GM12878 (cell line): ENCODE measurements at regions of chr3 and their contacts with region 1.

Region 1: DNA sequence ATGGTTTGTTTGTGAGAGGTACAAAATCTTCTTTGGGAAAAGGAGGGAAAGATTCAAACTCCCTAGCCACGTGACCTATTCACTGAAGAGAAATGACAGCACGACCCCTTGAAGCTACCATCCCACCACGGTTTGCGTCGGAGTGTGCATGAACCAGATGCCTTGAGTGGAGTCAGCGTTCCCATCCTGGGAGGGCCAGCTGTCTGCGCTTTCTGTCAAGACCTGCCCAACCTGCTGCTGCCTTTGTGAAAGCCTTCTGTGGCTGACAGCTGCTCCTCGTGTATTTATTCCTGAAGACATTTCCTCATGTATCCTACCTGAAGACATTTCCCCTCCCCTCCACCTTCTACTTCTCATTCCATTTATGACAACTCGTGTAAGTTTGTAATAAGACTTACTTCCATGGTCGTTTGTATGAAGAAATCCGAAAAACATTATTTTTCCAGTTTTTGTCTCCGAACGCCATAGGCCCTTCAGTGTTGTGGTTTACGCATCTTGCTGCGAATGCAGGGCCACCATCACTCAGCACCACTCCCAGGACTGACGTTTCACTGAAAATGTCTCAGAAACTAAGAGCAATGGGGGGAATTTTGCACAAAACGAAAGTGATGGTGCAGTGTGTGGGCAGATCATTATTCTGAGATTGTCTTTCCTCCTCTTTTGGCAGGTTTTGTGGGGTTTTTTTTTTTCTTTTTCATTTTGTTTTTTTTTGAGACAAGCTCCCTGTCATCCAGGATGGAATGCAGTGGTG is 18.9 kb downstream of the EBLN2 start:
- DNase-seq: no peak
- ATAC-seq: peak; percentile 87
- H3K4me3 ChIP-seq: no peak overlapping the region
- H3K27ac ChIP-seq: no peak overlapping the region
- H3K4me1 ChIP-seq: 0 out of 2 replicates have a peak, but pooled peaks cover 3% of the 10 kb centered on the region
- H3K27me3 ChIP-seq: no peaks in the 10 kb centered on the region
- CTCF ChIP-seq: no peak
- EP300 ChIP-seq: no peak
- POLR2A ChIP-seq: no peak
- RAD21 ChIP-seq: no peak

Region 2: GRCh38 chr3:72938471-72939265 is 141.7 kb before region 1 on chr3:
- CTCF ChIA-PET with region 1: interaction called, 10 read pairs
- POLR2A ChIA-PET with region 1: no interaction called
- RAD21 ChIA-PET with region 1: interaction called, 16 read pairs
- SMC1A ChIA-PET with region 1: interaction called, 13 read pairs
- in situ Hi-C with region 1: loop called (anchors 5 kb)
- intact Hi-C with region 1: no loop called
- DNase-seq: no peak
- ATAC-seq: peak; percentile 98
- H3K4me3 ChIP-seq: no peak overlapping the region
- H3K27ac ChIP-seq: no peak overlapping the region
- H3K4me1 ChIP-seq: no peaks in the 10 kb centered on the region
- H3K27me3 ChIP-seq: no peaks in the 10 kb centered on the region
- CTCF ChIP-seq: peak; percentile 39 to 51 (median 41); a peak in 4 of 6 replicates
- EP300 ChIP-seq: no peak
- POLR2A ChIP-seq: no peak
- RAD21 ChIP-seq: peak; percentile 67

Region 3: GRCh38 chr3:73624821-73625665 is 544.7 kb after region 1 on chr3 and contains the start of gene PDZRN3:
- CTCF ChIA-PET with region 1: no interaction called
- POLR2A ChIA-PET with region 1: no interaction called
- RAD21 ChIA-PET with region 1: no interaction called
- SMC1A ChIA-PET with region 1: no interaction called
- in situ Hi-C with region 1: no loop called
- intact Hi-C with region 1: no loop called
- DNase-seq: no peak
- ATAC-seq: no peak
- H3K4me3 ChIP-seq: no peak within 1 kb of the TSS
- H3K27ac ChIP-seq: no peak within 1 kb of the TSS
- H3K4me1 ChIP-seq: no peaks in the 10 kb centered on the region
- H3K27me3 ChIP-seq: peaks cover 0 to 5% of the 10 kb centered on the region in 2 experiments; a peak in 1 of 4 replicates
- CTCF ChIP-seq: no peak
- EP300 ChIP-seq: no peak
- POLR2A ChIP-seq: no peak
- RAD21 ChIP-seq: no peak
- polyA plus RNA-seq, gene PDZRN3: not detected